ENCODE measurements at regions of chr16 and their contacts with region 1.

Region 1: GRCh38 chr16:4402439-4403132 is 13.8 kb downstream of the CORO7 start:
- DNase-seq: peak; percentile 93
- ATAC-seq: peak; percentile 95

Region 2: GRCh38 chr16:4271176-4272066 is 131.2 kb before region 1 on chr16:
- intact Hi-C with region 1: loop called (anchors 10 kb)
- DNase-seq: peak; percentile 95
- ATAC-seq: peak; percentile 90

Region 3: DNA sequence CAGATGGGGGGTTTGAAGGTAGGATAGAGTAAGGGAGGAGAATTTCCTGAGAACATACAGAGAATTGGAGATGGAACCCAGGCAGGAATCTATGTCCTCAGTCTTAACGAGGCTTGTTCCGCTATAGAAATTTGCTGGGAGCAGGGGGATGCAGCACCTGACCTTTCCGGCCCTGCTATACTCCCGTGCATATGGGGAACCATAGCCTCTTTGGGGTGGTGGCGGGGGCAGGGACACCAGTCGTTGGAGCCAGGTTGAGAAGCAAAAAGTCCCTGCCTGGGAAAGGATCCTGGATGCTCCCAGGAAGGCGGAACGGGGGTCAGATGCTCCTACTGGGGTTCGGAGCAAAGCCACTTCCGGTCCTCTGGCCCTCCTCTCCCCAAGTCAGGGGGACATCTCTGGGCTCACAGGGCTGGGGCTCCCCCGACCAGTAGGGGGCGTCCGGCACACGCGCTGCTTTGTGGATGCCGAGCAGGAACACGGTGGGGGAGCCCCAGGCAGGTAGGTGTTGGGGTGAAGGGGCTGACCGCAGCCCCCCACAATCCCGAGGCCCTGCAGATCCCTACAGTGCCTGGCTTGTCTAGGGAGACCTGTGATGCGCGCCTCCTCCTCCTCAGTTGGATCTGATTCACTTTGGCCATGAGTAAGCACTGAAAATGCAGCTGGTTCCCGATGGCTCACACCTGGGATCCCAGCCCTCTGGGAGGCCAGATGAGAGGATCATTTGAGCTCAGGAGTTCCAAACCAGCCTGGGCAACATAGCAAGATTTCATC is 114.3 kb before region 1 on chr16:
- intact Hi-C with region 1: no loop called
- DNase-seq: peak; percentile 88
- ATAC-seq: peak; percentile 83

Region 4: GRCh38 chr16:4330277-4330874 is 72.2 kb before region 1 on chr16:
- intact Hi-C with region 1: no loop called
- DNase-seq: peak; percentile 92
- ATAC-seq: peak; percentile 72

Region 5: GRCh38 chr16:4358831-4359561 is 43.6 kb before region 1 on chr16:
- intact Hi-C with region 1: loop called (anchors 2 kb)
- DNase-seq: peak; percentile 85
- ATAC-seq: peak; percentile 73

Region 6: DNA sequence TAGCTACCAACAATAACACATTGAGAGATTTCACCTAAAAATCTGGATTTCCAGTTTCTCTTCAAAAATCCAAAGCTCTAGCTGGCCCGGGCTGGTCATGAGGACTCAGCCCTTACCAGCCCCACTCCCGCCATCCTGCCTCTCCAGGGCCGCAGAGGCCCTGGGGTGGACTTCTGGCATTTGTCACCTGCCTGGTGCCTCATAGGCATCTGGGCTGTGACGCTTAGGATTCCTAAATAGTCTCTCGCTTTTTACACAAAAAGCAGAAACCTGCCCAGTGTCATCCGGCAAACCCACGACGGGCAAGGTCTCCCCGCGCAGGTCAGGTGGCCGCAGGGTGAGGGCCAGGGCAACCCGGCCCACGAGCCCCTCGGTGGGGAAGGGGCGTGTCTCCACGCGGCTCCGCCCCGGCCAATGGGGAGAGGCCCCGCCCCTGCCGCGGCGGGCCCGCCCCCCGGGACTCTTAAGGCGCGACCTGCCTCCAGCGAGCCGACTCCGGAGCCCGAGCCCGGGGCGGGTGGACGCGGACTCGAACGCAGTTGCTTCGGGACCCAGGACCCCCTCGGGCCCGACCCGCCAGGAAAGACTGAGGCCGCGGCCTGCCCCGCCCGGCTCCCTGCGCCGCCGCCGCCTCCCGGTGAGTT is 31.1 kb before region 1 on chr16 and contains the start of gene VASN:
- intact Hi-C with region 1: no loop called
- DNase-seq: peak; percentile 94
- ATAC-seq: peak; percentile 69
- total RNA-seq, gene VASN: 38.4 TPM

Region 7: DNA sequence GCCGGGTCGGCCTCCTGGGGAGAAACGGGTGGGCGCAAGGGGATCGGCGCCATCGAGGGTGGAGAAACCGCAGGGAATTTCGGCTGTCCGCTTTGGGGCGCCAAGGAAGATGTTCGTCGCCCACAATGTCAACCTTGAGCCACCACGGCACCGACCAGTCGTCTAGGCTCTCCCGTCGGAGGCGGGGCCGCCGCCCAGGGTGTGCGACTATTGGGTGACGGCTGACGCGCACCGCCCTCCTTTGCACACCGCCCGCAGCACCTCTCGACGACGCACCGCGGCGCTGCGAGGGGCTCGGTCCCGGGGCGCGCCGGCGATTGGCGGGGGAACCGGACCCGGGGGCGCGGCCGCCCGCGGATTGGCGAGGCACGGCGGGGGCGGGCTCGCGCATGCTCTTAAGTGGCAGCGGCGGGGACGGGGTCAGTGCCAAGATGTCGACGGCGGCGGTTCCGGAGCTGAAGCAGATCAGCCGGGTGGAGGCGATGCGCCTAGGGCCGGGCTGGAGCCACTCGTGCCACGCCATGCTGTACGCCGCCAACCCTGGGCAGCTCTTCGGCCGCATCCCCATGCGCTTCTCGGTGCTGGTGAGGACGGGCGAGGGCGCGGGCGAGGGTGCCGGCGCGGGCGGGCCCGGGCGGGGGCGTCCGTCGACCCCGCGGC is 290.8 kb after region 1 on chr16 and contains the start of gene NUDT16L1:
- intact Hi-C with region 1: no loop called
- DNase-seq: peak; percentile 97
- ATAC-seq: peak; percentile 89
- total RNA-seq, gene NUDT16L1: 21.3 TPM

Measured in sciatic nerve (tissue), 2 donors.